ENCODE measurements at regions of chr19 and their contacts with region 1.

Region 1: DNA sequence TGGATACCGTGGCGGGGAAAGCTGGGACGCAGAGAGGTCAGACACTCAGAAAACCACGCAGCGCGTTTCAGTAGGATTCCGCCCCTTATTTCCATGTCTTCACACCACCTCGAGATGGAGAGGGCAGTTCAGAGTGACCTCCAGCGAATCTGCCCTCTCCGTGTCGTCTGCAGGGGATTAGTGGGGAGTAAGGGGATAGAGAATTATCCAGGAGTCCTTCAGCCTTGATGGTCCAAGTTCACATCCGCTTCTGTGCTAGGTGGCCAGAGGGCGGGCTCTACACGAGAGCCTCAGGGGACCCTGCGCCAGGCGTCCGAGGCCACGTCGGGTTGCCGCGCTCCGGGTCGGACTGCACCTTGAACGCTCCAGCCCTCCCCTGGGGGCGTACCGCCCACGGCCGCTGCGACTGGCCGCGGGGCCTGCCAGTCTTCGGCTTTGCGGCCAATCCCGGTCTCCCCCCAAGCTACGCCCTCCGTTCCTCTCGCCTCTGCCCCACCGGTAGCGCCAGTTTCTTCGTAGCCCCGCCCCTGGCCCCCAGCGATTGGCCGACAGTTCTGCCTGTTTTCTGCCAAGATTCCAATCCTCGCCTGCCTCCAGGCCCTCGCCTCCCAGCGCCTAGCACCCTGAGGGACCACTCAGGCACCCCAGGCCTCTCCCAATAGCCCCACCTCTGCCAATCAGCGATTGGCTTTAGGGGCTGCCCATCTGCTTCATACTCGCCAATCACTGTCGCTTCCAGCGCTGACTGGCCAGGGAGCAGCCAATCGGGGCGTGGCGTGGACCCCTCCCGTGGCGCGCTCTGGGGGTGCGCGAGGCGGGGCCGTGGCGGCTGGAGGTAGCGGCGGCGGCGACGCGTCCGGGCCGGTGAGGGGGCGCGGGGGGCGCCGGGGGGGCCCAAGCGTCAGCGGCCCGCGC is at the start of gene SLC25A42:
- DNase-seq: peak; percentile 100
- H3K4me3 ChIP-seq: peak within 1 kb of the TSS; percentile 20 to 52 (median 47)
- H3K27ac ChIP-seq: no peak within 1 kb of the TSS
- H3K4me1 ChIP-seq: peaks cover 21% of the 10 kb centered on the region
- H3K27me3 ChIP-seq: no peaks in the 10 kb centered on the region
- CTCF ChIP-seq: no peak
- POLR2A ChIP-seq: peak; percentile 51
- total RNA-seq, gene SLC25A42: 6.2 and 8.2 TPM in 2 replicates

Region 2: GRCh38 chr19:19033426-19034203 is 29.8 kb before region 1 on chr19 and contains the starts of genes ARMC6 and SUGP2:
- CTCF ChIA-PET with region 1: interaction called, 3 read pairs
- POLR2A ChIA-PET with region 1: no interaction called
- dilution Hi-C with region 1: no loop called
- intact Hi-C with region 1: loop called (anchors 1 kb)
- DNase-seq: peak; percentile 94
- H3K4me3 ChIP-seq: peak within 1 kb of the TSS; percentile 72 to 96 (median 96)
- H3K27ac ChIP-seq: peak within 1 kb of the TSS; percentile 50
- H3K4me1 ChIP-seq: peaks cover 12% of the 10 kb centered on the region
- H3K27me3 ChIP-seq: no peaks in the 10 kb centered on the region
- CTCF ChIP-seq: no peak
- POLR2A ChIP-seq: peak; percentile 78
- total RNA-seq, gene ARMC6: 35.4 and 44.7 TPM in 2 replicates
- total RNA-seq, gene SUGP2: 74.4 and 79.7 TPM in 2 replicates

Region 3: GRCh38 chr19:19105365-19106055 is 42.1 kb after region 1 on chr19:
- CTCF ChIA-PET with region 1: interaction called, 5 read pairs
- POLR2A ChIA-PET with region 1: no interaction called
- dilution Hi-C with region 1: no loop called
- intact Hi-C with region 1: loop called (anchors 5 kb)
- DNase-seq: peak; percentile 49
- H3K4me3 ChIP-seq: peak overlapping the region; percentile 34 to 52 (median 42)
- H3K27ac ChIP-seq: no peak overlapping the region
- H3K4me1 ChIP-seq: no peaks in the 10 kb centered on the region
- H3K27me3 ChIP-seq: no peaks in the 10 kb centered on the region
- CTCF ChIP-seq: no peak
- POLR2A ChIP-seq: peak; percentile 29

Region 4: GRCh38 chr19:19138169-19138981 is 74.9 kb after region 1 on chr19 and contains the start of gene TMEM161A:
- CTCF ChIA-PET with region 1: interaction called, 3 read pairs
- POLR2A ChIA-PET with region 1: no interaction called
- dilution Hi-C with region 1: no loop called
- intact Hi-C with region 1: loop called (anchors 2 kb)
- DNase-seq: peak; percentile 99
- H3K4me3 ChIP-seq: peak within 1 kb of the TSS; percentile 50 to 72 (median 70)
- H3K27ac ChIP-seq: peak within 1 kb of the TSS; percentile 45
- H3K4me1 ChIP-seq: peaks cover 8% of the 10 kb centered on the region
- H3K27me3 ChIP-seq: no peaks in the 10 kb centered on the region
- CTCF ChIP-seq: no peak
- POLR2A ChIP-seq: peak; percentile 76
- total RNA-seq, gene TMEM161A: 23.3 and 24.1 TPM in 2 replicates

Measured in endothelial cell of umbilical vein (primary cell).